Esophagus muscularis mucosa (tissue), 4 donors: ENCODE measurements at regions of chr3 and their contacts with region 1.

Region 1: GRCh38 chr3:17639765-17640164 is 102.7 kb downstream of the TBC1D5 start:
- DNase-seq: no peak
- H3K4me3 ChIP-seq: no peak overlapping the region
- H3K27ac ChIP-seq: no peak overlapping the region
- H3K4me1 ChIP-seq: peaks cover 7 to 40% (median 20%) of the 10 kb centered on the region in 4 donors
- H3K27me3 ChIP-seq: no peaks in the 10 kb centered on the region
- CTCF ChIP-seq: no peak
- EP300 ChIP-seq: no peak
- POLR2A ChIP-seq: no peak

Region 2: GRCh38 chr3:17423786-17424536 is 215.8 kb before region 1 on chr3:
- intact Hi-C with region 1: no loop called
- DNase-seq: no peak
- H3K4me3 ChIP-seq: no peak overlapping the region
- H3K27ac ChIP-seq: no peak overlapping the region
- H3K4me1 ChIP-seq: no peaks in the 10 kb centered on the region
- H3K27me3 ChIP-seq: no peaks in the 10 kb centered on the region
- CTCF ChIP-seq: no peak
- EP300 ChIP-seq: no peak
- POLR2A ChIP-seq: no peak

Region 3: DNA sequence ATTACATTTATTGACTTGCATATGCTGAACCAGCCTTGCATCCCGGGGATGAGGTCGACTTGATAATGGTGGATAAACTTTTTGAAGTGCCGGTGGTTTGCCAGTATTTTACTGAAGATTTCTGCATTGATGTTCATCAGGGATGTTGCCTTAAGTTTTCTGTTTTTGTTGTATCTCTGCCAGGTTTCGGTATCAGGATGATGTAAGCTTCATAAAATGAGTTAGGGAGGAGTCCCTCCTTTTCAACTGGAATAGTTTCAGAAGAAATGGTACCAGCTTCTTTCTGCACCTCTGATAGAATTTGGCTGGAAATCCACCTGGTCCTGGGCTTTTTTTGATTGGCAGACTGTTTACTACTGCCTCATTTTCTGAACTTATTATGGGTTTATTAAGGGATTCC is 148.2 kb before region 1 on chr3:
- intact Hi-C with region 1: no loop called
- DNase-seq: no peak
- H3K4me3 ChIP-seq: no peak overlapping the region
- H3K27ac ChIP-seq: no peak overlapping the region
- H3K4me1 ChIP-seq: no peaks in the 10 kb centered on the region
- H3K27me3 ChIP-seq: no peaks in the 10 kb centered on the region
- CTCF ChIP-seq: no peak
- EP300 ChIP-seq: no peak
- POLR2A ChIP-seq: no peak

Region 4: DNA sequence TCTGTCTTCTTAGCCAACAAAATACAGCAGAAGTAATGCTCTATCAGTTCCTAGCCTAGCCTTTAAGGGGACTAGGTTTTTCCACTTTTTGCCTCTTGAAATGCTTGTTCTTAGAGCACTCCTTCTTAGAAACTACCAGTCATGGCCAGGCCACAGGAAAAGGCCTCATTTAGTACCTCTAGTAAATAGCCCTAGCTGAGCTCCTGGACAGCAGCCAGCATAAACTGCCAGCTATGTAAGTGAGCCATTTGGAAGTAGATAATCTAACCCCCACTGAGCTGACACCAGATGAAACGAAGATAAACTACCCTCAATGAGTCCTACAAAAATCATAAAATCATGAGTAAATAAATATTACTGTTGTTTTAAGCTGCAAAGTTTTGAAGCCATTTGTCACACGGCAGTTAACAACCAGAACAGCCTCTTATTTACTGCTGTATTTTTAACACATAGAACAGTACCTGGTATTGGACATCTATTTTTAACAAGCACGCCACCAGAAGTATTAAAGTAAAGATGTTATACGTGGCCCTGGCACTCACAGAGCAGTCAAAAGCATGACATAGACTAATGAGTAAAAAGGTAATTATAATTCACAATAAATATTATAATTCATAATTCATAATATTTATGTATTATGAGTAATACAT is 90.7 kb after region 1 on chr3:
- intact Hi-C with region 1: no loop called
- DNase-seq: no peak
- H3K4me3 ChIP-seq: no peak overlapping the region
- H3K27ac ChIP-seq: no peak overlapping the region
- H3K4me1 ChIP-seq: peaks cover 0 to 4% (median 2%) of the 10 kb centered on the region in 4 donors
- H3K27me3 ChIP-seq: no peaks in the 10 kb centered on the region
- CTCF ChIP-seq: no peak
- EP300 ChIP-seq: no peak
- POLR2A ChIP-seq: no peak

Region 5: GRCh38 chr3:17742108-17742879 is 102.5 kb after region 1 on chr3 and contains the start of gene TBC1D5:
- intact Hi-C with region 1: loop called (anchors 5 kb)
- DNase-seq: peak; percentile 98
- H3K4me3 ChIP-seq: peak within 1 kb of the TSS; percentile 69 to 95 (median 90)
- H3K27ac ChIP-seq: peak within 1 kb of the TSS; percentile 97 to 99 (median 98)
- H3K4me1 ChIP-seq: peaks cover 26 to 50% (median 44%) of the 10 kb centered on the region in 4 donors
- H3K27me3 ChIP-seq: no peaks in the 10 kb centered on the region
- CTCF ChIP-seq: peak in 2 of 3 experiments; percentile 7 to 10
- EP300 ChIP-seq: no peak
- POLR2A ChIP-seq: peak; percentile 61
- total RNA-seq, gene TBC1D5: 54.0 to 83.1 (median 63.6) TPM

Region 6: GRCh38 chr3:18466136-18466535 is 826.4 kb after region 1 on chr3:
- intact Hi-C with region 1: no loop called
- DNase-seq: no peak
- H3K4me3 ChIP-seq: no peak overlapping the region
- H3K27ac ChIP-seq: no peak overlapping the region
- H3K4me1 ChIP-seq: no peaks in the 10 kb centered on the region
- H3K27me3 ChIP-seq: no peaks in the 10 kb centered on the region
- CTCF ChIP-seq: no peak
- EP300 ChIP-seq: no peak
- POLR2A ChIP-seq: no peak